Activated CD4-positive, alpha-beta T cell treated with anti-CD3 and anti-CD28 coated beads, Interleukin-2, amount 10 ng/mL, durations not matched to agents 24 days and 14 days (primary cell): ENCODE measurements at regions of chr6 and their contacts with region 1.

Region 1: GRCh38 chr6:41801380-41801779 is 13.9 kb downstream of the TOMM6 start:
- DNase-seq: no peak
- H3K4me3 Mint-ChIP-seq: no peak overlapping the region
- H3K27ac Mint-ChIP-seq: no peak overlapping the region
- H3K4me1 Mint-ChIP-seq: peaks cover 4% of the 10 kb centered on the region
- H3K27me3 Mint-ChIP-seq: no peaks in the 10 kb centered on the region

Region 2: GRCh38 chr6:41878246-41878645 is 76.9 kb after region 1 on chr6:
- intact Hi-C with region 1: loop called (anchors 10 kb)
- DNase-seq: no peak
- H3K4me3 Mint-ChIP-seq: no peak overlapping the region
- H3K27ac Mint-ChIP-seq: no peak overlapping the region
- H3K4me1 Mint-ChIP-seq: peaks cover 2% of the 10 kb centered on the region
- H3K27me3 Mint-ChIP-seq: no peaks in the 10 kb centered on the region